CD4-positive, alpha-beta T cell (primary cell): ENCODE measurements at regions of chr2 and their contacts with region 1.

Region 1: GRCh38 chr2:61538200-61538919 is at the start of gene XPO1:
- DNase-seq: peak; percentile 96 to 100 (median 98)
- ATAC-seq: peak; percentile 75
- H3K4me3 ChIP-seq: peak within 1 kb of the TSS; percentile 85
- H3K4me3 Mint-ChIP-seq: peak within 1 kb of the TSS; percentile 99
- H3K27ac ChIP-seq: peak within 1 kb of the TSS; percentile 98 to 99
- H3K27ac Mint-ChIP-seq: peak within 1 kb of the TSS; percentile 97
- H3K4me1 ChIP-seq: peaks cover 15% of the 10 kb centered on the region
- H3K4me1 Mint-ChIP-seq: peaks cover 34% of the 10 kb centered on the region
- H3K27me3 ChIP-seq: no peaks in the 10 kb centered on the region
- H3K27me3 Mint-ChIP-seq: no peaks in the 10 kb centered on the region
- CTCF ChIP-seq: no peak
- total RNA-seq, gene XPO1: 111 to 118 TPM

Region 2: DNA sequence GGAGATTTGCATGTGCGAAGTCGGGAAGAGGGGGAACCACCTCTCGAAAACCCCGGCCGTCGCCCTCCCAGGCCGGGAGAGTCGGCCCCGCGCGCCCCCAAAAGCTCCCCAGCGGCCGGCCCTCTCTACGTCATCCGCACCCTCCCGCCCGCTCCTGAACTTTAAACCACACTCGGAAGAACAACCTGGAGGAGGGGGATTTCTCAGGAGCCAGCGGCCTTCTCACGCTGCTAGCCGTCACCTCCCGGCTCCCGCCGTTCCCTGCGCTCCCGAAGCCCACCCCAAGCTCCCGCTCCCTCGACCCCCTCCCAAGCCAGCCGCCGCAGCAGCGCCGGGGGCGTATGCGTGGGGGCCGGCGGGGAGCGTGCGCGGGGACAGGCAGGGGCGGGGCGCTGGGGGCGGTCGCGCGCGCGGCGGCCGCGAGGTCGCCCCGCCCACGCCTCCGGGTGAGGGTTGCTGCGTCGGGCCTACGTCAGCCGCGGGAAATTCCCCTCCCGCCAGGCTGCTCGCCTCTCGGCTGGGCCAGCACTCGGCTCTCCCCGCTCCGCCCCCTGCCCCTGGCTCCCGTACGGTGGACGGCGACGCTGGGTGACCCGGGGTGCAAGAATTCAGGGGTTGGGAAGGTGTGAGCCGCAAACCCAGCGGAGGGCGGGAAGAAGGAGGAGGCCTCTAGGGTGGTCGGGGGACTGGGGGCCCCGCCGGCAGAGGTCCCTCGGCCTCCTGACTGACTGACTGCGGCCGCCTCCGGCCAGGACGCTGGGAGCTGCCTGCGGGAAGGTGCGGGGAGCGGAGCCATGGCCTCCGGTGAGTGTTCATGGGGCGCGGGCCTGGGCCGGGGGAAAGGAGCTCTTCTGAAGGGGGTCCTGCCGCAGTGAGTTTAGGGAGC is 657.1 kb before region 1 on chr2 and contains the start of gene REL:
- CTCF ChIA-PET with region 1: no interaction called
- POLR2A ChIA-PET with region 1: interaction called, 12 read pairs
- intact Hi-C with region 1: no loop called
- DNase-seq: peak; percentile 75 to 98 (median 84)
- ATAC-seq: peak; percentile 83
- H3K4me3 ChIP-seq: peak within 1 kb of the TSS; percentile 94
- H3K4me3 Mint-ChIP-seq: peak within 1 kb of the TSS; percentile 96
- H3K27ac ChIP-seq: peak within 1 kb of the TSS; percentile 100
- H3K27ac Mint-ChIP-seq: peak within 1 kb of the TSS; percentile 98
- H3K4me1 ChIP-seq: peaks cover 5% of the 10 kb centered on the region
- H3K4me1 Mint-ChIP-seq: peaks cover 42% of the 10 kb centered on the region
- H3K27me3 ChIP-seq: no peaks in the 10 kb centered on the region
- H3K27me3 Mint-ChIP-seq: no peaks in the 10 kb centered on the region
- CTCF ChIP-seq: no peak
- total RNA-seq, gene REL: 91.9 to 99.9 TPM

Region 3: GRCh38 chr2:61176755-61177726 is 361.3 kb before region 1 on chr2:
- CTCF ChIA-PET with region 1: no interaction called
- POLR2A ChIA-PET with region 1: interaction called, 38 read pairs
- intact Hi-C with region 1: loop called in 1 of 2 experiments (anchors 5 kb)
- DNase-seq: peak; percentile 86 to 98 (median 94)
- ATAC-seq: peak; percentile 84
- H3K4me3 ChIP-seq: peak overlapping the region; percentile 88
- H3K4me3 Mint-ChIP-seq: peak overlapping the region; percentile 90
- H3K27ac ChIP-seq: peak overlapping the region; percentile 90 to 91
- H3K27ac Mint-ChIP-seq: peak overlapping the region; percentile 86
- H3K4me1 ChIP-seq: peaks cover 57% of the 10 kb centered on the region
- H3K4me1 Mint-ChIP-seq: peaks cover 48% of the 10 kb centered on the region
- H3K27me3 ChIP-seq: no peaks in the 10 kb centered on the region
- H3K27me3 Mint-ChIP-seq: no peaks in the 10 kb centered on the region
- CTCF ChIP-seq: no peak

Region 4: DNA sequence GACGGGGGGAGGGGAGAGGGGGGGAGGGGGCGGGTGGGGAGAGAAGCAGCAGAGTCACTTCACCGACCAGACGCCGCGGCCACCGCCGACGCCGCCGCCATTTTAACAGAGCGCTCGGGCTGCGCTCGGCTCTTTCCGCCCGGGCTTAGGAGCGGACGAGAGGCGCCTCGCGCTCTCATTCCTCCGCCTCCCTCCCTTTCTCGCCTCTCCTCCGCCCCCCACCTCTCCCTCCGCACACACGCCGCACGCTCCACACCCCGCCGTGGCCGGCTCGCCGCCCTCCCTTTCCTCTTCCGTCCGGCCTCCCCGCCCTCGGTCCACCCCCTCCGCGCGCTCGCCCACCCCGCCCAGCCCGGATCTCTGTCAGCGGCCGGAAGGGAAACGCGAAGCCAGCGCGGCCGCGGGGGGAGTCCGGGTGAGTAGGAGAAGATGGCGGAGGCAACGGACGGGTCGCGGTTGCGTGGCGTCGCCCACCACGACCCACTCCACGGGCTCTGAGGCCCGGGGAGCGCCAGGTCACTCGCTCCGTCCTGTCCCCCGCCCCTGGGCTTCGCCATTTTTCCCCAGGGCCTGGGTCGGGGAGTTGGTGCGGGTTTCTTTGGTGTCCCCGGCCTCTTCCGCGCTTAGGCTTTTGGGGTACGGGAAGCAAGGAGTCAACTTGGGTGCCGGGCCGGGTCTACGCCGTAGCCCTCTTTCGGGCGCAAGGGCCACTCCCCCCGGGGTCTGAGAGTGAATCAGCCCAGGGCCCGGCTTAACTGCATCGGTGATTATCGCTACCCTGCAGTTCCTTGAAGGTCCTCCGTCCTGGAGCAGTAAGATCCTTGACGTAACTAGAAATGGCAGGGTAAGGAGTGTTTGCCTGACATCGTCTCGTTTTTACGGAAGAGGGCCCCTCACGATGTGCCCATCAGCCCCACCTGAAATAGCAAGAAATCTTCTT is 67.1 kb before region 1 on chr2 and contains the start of gene USP34:
- CTCF ChIA-PET with region 1: interaction called, 3 read pairs
- POLR2A ChIA-PET with region 1: interaction called, 53 read pairs
- intact Hi-C with region 1: loop called (anchors 2 kb)
- DNase-seq: peak; percentile 83 to 98 (median 90)
- ATAC-seq: peak; percentile 86
- H3K4me3 ChIP-seq: peak within 1 kb of the TSS; percentile 99
- H3K4me3 Mint-ChIP-seq: peak within 1 kb of the TSS; percentile 99
- H3K27ac ChIP-seq: peak within 1 kb of the TSS; percentile 95 to 100
- H3K27ac Mint-ChIP-seq: peak within 1 kb of the TSS; percentile 95
- H3K4me1 ChIP-seq: peaks cover 38% of the 10 kb centered on the region
- H3K4me1 Mint-ChIP-seq: peaks cover 36% of the 10 kb centered on the region
- H3K27me3 ChIP-seq: no peaks in the 10 kb centered on the region
- H3K27me3 Mint-ChIP-seq: no peaks in the 10 kb centered on the region
- CTCF ChIP-seq: no peak
- total RNA-seq, gene USP34: 137 to 138 TPM

Region 5: DNA sequence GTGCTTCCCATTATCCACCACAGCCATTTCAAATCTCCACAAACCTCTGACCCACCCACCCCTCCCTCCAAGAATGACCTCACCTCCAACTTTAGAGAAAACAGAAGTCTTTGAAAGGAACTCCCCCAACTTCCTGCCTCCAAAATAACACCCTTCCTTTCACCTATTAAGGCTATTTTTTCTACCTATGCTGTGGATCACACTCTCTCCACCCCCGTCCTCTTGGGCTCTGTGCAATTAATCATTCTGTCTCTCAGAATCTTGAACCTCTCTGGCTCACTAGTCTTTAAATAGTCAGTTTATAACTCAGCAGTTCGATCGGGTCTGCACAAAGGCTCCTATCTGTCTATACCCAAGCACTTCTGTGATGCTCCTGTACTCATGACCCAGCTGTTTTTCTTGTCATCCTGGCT is 37.1 kb after region 1 on chr2:
- CTCF ChIA-PET with region 1: no interaction called
- POLR2A ChIA-PET with region 1: interaction called, 13 read pairs
- intact Hi-C with region 1: no loop called
- DNase-seq: peak in 2 of 14 experiments; percentile 3 to 4
- ATAC-seq: peak; percentile 21
- H3K4me3 ChIP-seq: no peak overlapping the region
- H3K4me3 Mint-ChIP-seq: no peak overlapping the region
- H3K27ac ChIP-seq: no peak overlapping the region
- H3K27ac Mint-ChIP-seq: peak overlapping the region; percentile 21
- H3K4me1 ChIP-seq: peaks cover 6% of the 10 kb centered on the region
- H3K4me1 Mint-ChIP-seq: peaks cover 18% of the 10 kb centered on the region
- H3K27me3 ChIP-seq: no peaks in the 10 kb centered on the region
- H3K27me3 Mint-ChIP-seq: no peaks in the 10 kb centered on the region
- CTCF ChIP-seq: no peak

Region 6: DNA sequence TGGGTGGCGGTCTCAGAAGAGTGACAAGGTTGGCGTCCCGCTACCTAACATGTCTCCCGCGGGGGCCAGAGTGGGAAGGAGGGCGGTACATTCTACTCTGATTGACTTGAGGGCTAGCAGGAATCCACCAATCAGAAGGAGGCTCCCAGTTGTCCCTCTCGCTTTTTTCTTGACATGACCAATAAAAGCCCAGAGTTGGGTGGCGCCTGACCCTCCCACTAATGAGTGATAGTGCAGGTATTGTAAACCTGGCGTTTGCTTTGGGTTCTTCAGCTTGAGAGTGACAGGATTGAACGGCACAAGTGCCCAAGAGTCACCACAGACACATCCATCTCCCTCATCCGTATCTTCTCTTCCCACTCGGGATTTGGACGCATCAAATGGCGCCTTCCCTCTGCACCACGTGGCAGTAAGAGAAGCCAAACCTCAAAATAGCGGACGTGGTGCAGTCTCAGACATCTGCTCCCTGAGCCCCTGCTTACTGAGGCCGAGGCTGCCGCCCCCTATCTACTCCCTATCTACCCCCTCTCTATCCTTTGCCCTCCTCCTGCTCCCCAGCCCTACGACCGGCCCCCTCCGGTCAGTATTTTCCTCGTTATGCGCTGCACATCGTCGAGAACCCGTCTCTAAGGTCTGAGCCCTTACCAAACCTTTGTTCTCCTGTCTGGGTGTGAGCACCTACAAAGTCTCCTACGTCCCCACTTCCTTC is 316.3 kb after region 1 on chr2:
- CTCF ChIA-PET with region 1: no interaction called
- POLR2A ChIA-PET with region 1: interaction called, 17 read pairs
- intact Hi-C with region 1: loop called in 1 of 2 experiments (anchors 10 kb)
- DNase-seq: peak; percentile 75 to 97 (median 83)
- ATAC-seq: peak; percentile 91
- H3K4me3 ChIP-seq: peak overlapping the region; percentile 98
- H3K4me3 Mint-ChIP-seq: peak overlapping the region; percentile 97
- H3K27ac ChIP-seq: peak overlapping the region; percentile 65 to 79
- H3K27ac Mint-ChIP-seq: peak overlapping the region; percentile 94
- H3K4me1 ChIP-seq: peaks cover 14% of the 10 kb centered on the region
- H3K4me1 Mint-ChIP-seq: peaks cover 16% of the 10 kb centered on the region
- H3K27me3 ChIP-seq: no peaks in the 10 kb centered on the region
- H3K27me3 Mint-ChIP-seq: no peaks in the 10 kb centered on the region
- CTCF ChIP-seq: no peak

Region 7: DNA sequence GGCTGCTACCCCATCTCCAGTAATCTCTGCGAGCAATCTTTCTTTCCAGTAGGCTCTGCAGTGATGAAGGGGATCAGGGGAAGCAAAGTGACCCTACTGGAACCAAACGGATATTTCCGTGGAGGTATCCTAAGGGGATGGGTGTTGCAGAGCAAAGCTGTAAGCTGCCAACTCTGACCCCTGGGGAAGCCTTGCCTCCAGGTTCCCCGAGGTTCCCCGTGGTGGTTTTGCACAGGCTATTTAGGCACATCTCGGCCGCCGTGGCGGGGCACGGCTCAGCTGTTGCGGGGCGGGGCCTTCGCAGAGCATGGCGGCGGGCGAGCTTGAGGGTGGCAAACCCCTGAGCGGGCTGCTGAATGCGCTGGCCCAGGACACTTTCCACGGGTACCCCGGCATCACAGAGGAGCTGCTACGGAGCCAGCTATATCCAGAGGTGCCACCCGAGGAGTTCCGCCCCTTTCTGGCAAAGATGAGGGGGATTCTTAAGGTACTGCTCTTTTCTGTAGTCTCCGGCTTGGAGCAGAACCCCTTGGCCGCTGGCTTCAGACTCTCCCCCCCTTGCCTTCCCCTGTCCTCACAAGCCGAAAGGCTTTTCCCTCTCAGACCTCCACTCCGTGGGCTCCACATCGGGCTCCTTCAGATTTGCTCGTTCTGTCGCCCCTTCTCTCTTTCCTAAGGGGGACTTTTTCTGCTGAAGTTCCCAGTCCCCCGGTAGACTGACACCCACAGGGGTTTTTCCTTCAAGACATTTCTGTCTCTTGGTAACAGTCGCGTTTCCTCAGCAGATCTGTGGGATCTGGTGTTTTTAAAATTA is 367.2 kb after region 1 on chr2 and contains the start of gene COMMD1:
- CTCF ChIA-PET with region 1: no interaction called
- POLR2A ChIA-PET with region 1: no interaction called
- intact Hi-C with region 1: no loop called
- DNase-seq: peak; percentile 60 to 89 (median 74)
- ATAC-seq: peak; percentile 97
- H3K4me3 ChIP-seq: peak within 1 kb of the TSS; percentile 92
- H3K4me3 Mint-ChIP-seq: peak within 1 kb of the TSS; percentile 96
- H3K27ac ChIP-seq: peak within 1 kb of the TSS; percentile 23 to 38
- H3K27ac Mint-ChIP-seq: peak within 1 kb of the TSS; percentile 88
- H3K4me1 ChIP-seq: peaks cover 10% of the 10 kb centered on the region
- H3K4me1 Mint-ChIP-seq: peaks cover 22% of the 10 kb centered on the region
- H3K27me3 ChIP-seq: no peaks in the 10 kb centered on the region
- H3K27me3 Mint-ChIP-seq: no peaks in the 10 kb centered on the region
- CTCF ChIP-seq: no peak
- total RNA-seq, gene COMMD1: 11.5 to 13.2 TPM